RWPE1 (cell line): ENCODE measurements at regions of chr4 and their contacts with region 1.

Region 1: DNA sequence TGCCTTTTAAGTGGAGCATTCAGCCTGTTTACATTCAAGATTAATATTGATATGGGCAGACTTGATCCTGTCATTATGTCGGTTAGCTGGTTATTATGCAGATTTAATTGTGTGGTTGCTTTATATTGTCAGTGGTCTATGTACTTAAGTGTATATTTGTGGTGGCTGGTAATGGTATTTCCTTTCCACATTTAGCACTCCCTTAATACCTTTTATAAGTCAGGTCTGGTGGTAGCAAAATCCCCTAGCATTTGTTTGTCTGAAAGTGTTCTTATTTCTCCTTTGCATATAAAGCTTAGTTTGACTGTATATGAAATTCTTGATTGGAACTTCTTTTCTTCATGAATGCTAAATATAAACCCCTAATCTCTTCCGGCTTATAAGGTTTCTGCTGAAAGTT is 403.7 kb upstream of the EPHA5 start:
- DNase-seq: no peak
- H3K27ac ChIP-seq: no peak overlapping the region
- CTCF ChIP-seq: no peak

Region 2: GRCh38 chr4:65287072-65287471 is 786.9 kb before region 1 on chr4:
- CTCF ChIA-PET with region 1: no interaction called
- POLR2A ChIA-PET with region 1: no interaction called
- DNase-seq: no peak
- H3K27ac ChIP-seq: no peak overlapping the region
- CTCF ChIP-seq: no peak

Region 3: DNA sequence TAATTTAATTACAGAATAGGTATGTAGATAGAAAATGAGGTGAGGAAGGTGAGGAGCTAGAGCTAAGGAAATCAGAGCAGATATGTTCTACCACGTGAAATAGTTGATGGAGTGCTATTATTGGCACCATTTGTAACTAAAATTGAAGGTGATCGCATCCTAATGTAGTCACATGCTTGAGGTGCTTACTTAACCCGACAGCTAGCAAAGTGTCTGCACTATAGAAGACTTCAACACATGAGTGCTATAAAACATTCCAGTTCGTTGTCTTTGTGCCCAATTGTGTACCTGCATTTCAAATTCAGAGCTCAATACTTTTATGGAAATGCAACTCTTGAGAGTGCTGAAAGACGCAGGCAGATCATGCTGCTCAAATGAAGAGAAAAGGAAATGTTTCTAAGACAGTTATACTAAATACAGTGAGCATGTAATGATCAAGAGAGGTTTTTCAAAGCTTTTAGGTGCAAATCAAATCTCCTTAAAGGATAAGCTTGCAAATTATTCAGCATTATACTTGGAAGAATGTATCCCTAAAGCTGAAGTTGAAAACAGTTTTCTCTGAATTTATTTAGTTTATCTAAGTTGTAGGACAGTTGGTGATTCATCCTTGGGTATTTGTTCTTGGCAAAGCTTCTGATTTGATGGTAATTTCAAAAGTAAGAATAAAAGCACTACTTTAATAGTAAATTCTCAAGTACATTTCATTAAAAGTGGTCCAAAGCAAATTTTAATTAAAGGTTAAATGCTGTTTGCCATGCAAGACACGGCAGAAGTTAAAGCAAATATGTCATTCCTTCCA is 179.8 kb before region 1 on chr4:
- CTCF ChIA-PET with region 1: no interaction called
- POLR2A ChIA-PET with region 1: no interaction called
- DNase-seq: no peak
- H3K27ac ChIP-seq: no peak overlapping the region
- CTCF ChIP-seq: no peak

Region 4: GRCh38 chr4:66062044-66062443 is 11.9 kb before region 1 on chr4:
- CTCF ChIA-PET with region 1: no interaction called
- POLR2A ChIA-PET with region 1: no interaction called
- DNase-seq: no peak
- H3K27ac ChIP-seq: no peak overlapping the region
- CTCF ChIP-seq: no peak

Region 5: GRCh38 chr4:66567551-66567950 is 493.6 kb after region 1 on chr4:
- CTCF ChIA-PET with region 1: interaction called, 10 read pairs
- POLR2A ChIA-PET with region 1: no interaction called
- DNase-seq: no peak
- H3K27ac ChIP-seq: no peak overlapping the region
- CTCF ChIP-seq: no peak